Colonic mucosa (tissue), 4 donors: ENCODE measurements at regions of chr3 and their contacts with region 1.

Region 1: DNA sequence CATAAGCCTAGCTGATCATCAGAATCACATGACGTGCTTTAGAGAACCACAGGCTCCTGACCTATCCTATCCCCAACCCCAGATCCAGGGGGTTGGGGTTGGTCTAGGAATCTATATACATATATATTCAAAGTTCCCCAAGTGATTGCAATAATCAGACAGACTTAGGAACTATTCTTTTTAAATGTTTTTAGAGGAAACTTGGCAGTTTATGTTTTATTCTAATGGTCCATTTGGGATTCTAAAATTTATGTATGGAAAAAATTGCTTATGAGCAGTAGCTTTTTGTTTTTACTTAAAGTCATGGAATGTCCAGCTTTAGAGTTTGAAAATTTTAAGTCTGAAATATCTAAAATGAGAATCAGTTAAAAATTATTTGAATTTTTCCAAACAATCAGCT is 22.1 kb downstream of the MFN1 start:
- DNase-seq: no peak
- H3K4me3 ChIP-seq: no peak overlapping the region
- H3K27ac ChIP-seq: no peak overlapping the region
- H3K4me1 ChIP-seq: no peaks in the 10 kb centered on the region
- H3K27me3 ChIP-seq: no peaks in the 10 kb centered on the region
- CTCF ChIP-seq: no peak

Region 2: GRCh38 chr3:179591313-179591712 is 221.7 kb after region 1 on chr3:
- intact Hi-C with region 1: loop called (anchors 10 kb)
- DNase-seq: no peak
- H3K4me3 ChIP-seq: no peak overlapping the region
- H3K27ac ChIP-seq: no peak overlapping the region
- H3K4me1 ChIP-seq: no peaks in the 10 kb centered on the region
- H3K27me3 ChIP-seq: no peaks in the 10 kb centered on the region
- CTCF ChIP-seq: no peak